BJ (cell line): ENCODE measurements at regions of chr1 and their contacts with region 1.

Region 1: DNA sequence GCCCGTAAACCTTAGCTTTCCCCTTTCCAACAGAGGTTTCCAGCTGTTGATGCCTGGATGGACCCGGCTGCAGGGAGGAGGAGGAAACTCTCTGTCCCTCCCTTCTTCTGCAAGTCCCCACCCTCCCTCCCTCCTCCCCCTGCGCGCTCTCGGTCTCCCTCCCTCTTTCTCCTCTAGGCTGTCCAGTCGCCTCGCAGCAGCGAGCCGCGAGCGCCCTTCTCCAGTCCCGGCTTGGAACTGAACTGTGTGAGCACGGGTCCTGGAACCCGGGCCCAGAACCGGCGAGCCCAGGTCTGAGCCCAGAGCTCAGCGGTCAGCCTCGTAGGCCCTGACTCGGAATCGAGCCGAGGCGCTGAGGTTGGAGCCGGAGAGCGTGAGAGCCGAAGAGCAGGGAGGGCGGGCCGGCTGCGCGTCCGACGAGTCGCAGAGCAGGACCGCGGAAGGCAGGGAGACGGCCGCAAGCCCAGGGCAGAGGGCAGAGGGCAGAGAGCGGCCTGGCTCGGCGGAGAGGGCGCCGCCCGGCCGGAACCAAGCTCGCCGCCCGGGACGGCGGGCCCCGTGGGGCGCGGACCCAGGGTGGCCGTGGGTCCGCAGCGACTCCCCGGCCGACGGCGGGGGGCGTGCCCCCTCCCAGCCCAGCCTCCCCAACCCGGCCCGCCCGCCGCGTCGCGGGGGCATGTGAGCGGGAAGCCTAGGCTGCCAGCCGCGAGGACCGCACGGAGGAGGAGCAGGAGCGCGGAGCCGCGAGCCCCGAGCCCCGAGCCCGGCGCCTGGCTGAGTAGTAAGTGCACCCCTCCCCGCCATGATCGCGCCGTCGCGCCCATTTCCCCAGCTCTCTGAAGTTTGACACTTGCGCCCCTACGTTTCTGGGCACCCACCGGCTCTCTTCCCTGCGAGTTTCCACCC is at the start of gene SOX13:
- DNase-seq: no peak
- H3K4me3 ChIP-seq: peak within 1 kb of the TSS; percentile 84
- H3K27me3 ChIP-seq: no peaks in the 10 kb centered on the region
- CTCF ChIP-seq: peak; percentile 43
- polyA plus RNA-seq, gene SOX13: 6.2 and 9.5 TPM in 2 replicates

Region 2: GRCh38 chr1:203944651-203945404 is 128.4 kb before region 1 on chr1:
- CTCF ChIA-PET with region 1: no interaction called
- POLR2A ChIA-PET with region 1: interaction called, 11 read pairs
- DNase-seq: no peak
- H3K4me3 ChIP-seq: no peak overlapping the region
- H3K27me3 ChIP-seq: no peaks in the 10 kb centered on the region
- CTCF ChIP-seq: no peak